Thyroid gland (tissue), 4 donors: ENCODE measurements at regions of chr6 and their contacts with region 1.

Region 1: GRCh38 chr6:96900873-96901272 is 3.2 kb upstream of the NDUFAF4 start:
- DNase-seq: no peak
- H3K4me3 ChIP-seq: no peak overlapping the region
- H3K27ac ChIP-seq: no peak overlapping the region
- H3K4me1 ChIP-seq: peaks cover 7 to 15% of the 10 kb centered on the region in 2 donors
- H3K27me3 ChIP-seq: no peaks in the 10 kb centered on the region
- CTCF ChIP-seq: no peak
- POLR2A ChIP-seq: no peak

Region 2: GRCh38 chr6:96816301-96816817 is 84.5 kb before region 1 on chr6:
- intact Hi-C with region 1: no loop called
- DNase-seq: no peak
- H3K4me3 ChIP-seq: no peak overlapping the region
- H3K27ac ChIP-seq: no peak overlapping the region
- H3K4me1 ChIP-seq: peaks cover 4 to 8% of the 10 kb centered on the region in 2 donors
- H3K27me3 ChIP-seq: no peaks in the 10 kb centered on the region
- CTCF ChIP-seq: no peak
- POLR2A ChIP-seq: no peak

Region 3: DNA sequence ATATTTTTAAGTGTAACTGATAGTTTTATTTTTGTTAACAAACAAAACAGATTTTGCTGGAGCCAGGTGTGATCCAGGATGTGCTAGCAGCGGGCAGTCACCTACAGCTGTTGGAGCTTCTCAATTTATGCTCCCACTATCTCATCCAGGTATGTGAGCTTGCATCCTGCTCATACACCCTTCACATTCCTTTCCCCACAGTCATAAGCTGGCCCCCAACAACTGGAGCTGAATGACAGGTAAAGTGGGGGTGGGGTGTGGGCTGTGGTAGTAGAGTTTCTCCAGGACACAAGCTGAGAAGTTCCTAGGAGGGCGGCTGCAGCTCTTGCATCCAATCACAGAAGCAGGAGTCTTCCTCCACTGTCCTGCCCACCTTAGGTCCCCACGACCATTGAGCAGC is 163.7 kb after region 1 on chr6:
- intact Hi-C with region 1: loop called (anchors 5 kb)
- DNase-seq: no peak
- H3K4me3 ChIP-seq: no peak overlapping the region
- H3K27ac ChIP-seq: no peak overlapping the region
- H3K4me1 ChIP-seq: no peaks in the 10 kb centered on the region
- H3K27me3 ChIP-seq: no peaks in the 10 kb centered on the region
- CTCF ChIP-seq: no peak
- POLR2A ChIP-seq: no peak